ENCODE measurements at regions of chr10 and their contacts with region 1.

Region 1: DNA sequence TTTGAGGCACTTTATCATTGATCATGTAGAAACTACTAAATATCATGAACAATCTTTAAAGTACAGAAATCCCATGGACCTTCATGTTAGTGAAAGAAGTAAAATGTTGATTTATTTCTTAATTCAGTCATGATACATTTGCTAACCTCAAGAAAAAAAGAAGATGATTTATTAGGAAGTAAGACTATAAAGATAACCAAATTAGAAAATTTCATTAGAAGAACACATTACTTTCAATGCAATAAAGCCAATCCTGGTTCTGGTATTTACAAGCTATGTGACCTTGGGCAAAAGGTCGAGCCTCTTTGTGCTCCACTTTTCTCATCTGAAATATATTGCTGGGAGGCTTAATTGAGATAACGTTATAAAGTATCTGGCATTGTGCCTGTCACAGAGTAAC is 365.0 kb downstream of the KIF20B start:
- DNase-seq: no peak
- ATAC-seq: no peak
- H3K4me3 ChIP-seq: no peak overlapping the region
- H3K4me3 Mint-ChIP-seq: no peak overlapping the region
- H3K27ac ChIP-seq: no peak overlapping the region
- H3K27ac Mint-ChIP-seq: no peak overlapping the region
- H3K4me1 ChIP-seq: no peaks in the 10 kb centered on the region
- H3K4me1 Mint-ChIP-seq: no peaks in the 10 kb centered on the region
- H3K27me3 ChIP-seq: no peaks in the 10 kb centered on the region
- H3K27me3 Mint-ChIP-seq: peaks cover under 1 to 1% of the 10 kb centered on the region in 2 donors

Region 2: GRCh38 chr10:90887555-90887954 is 821.1 kb after region 1 on chr10:
- CTCF ChIA-PET with region 1: interaction called in 1 of 2 experiments, 10 read pairs
- POLR2A ChIA-PET with region 1: no interaction called
- DNase-seq: no peak
- ATAC-seq: no peak
- H3K4me3 ChIP-seq: no peak overlapping the region
- H3K4me3 Mint-ChIP-seq: no peak overlapping the region
- H3K27ac ChIP-seq: no peak overlapping the region
- H3K27ac Mint-ChIP-seq: no peak overlapping the region
- H3K4me1 ChIP-seq: no peaks in the 10 kb centered on the region
- H3K4me1 Mint-ChIP-seq: peaks cover 6 to 23% (median 16%) of the 10 kb centered on the region in 3 donors
- H3K27me3 ChIP-seq: no peaks in the 10 kb centered on the region
- H3K27me3 Mint-ChIP-seq: no peaks in the 10 kb centered on the region

Measured in T-cell (primary cell).